ENCODE measurements at regions of chr16 and their contacts with region 1.

Region 1: GRCh38 chr16:3059000-3059722 is 6.3 kb upstream of the IL32 start:
- DNase-seq: peak; percentile 64 to 96
- H3K4me3 ChIP-seq: peak overlapping the region; percentile 39 to 86 (median 67)
- H3K27ac ChIP-seq: no peak overlapping the region
- H3K4me1 ChIP-seq: peaks cover 5 to 19% (median 6%) of the 10 kb centered on the region in 4 experiments; a peak in 6 of 7 replicates
- H3K27me3 ChIP-seq: no peaks in the 10 kb centered on the region; a peak in 1 of 7 replicates
- CTCF ChIP-seq: peak; percentile 79 to 99 (median 88)
- EP300 ChIP-seq: 0 out of 3 replicates have a peak, but pooled peaks of 1 of the 2 experiments have one; percentile 53
- POLR2A ChIP-seq: peak in 1 of 2 experiments; percentile 39; a peak in 1 of 3 replicates
- RAD21 ChIP-seq: peak; percentile 81 to 95

Region 2: DNA sequence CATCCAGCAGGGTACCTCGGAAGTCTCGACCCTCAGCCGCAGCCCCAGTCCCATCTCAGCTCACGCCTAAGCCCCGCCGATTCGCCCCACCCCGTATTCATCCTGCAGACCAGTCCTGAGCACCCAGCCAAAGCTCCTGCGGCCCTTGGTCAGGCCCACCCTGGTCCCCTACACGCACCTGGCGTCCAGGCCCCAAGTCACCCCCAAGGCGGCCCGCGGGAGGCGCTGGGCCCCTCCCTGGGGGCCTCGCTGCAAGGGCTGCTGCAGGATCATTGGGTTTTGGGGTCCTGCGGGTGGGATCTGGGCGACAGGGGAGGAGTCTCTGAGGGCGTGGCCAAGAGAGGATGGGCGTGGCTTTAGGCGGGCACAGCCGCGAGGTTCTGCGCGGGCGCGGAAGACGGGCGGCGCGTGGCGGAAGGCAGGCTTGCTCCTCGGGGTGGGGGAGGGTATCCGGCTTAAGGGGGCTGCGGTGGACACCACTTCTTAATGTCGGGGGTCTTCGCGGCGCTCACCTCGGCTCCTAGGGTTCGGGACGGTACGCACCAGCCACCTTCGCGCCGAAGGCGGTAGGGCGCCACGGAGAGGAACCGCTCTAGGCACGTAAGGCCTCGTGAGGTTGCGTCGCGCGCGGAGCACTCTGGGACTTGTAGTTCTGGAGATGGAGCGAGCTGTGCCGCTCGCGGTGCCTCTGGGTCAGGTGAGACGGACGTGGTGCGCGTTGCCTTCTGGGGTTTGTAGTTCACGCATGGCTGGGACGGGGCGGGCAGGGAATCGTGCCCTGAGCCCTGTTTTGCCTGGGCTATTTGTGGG is 35.3 kb before region 1 on chr16 and contains the starts of genes HCFC1R1 and THOC6:
- CTCF ChIA-PET with region 1: interaction called, 7 read pairs
- POLR2A ChIA-PET with region 1: interaction called, 43 read pairs
- DNase-seq: peak; percentile 97 to 98
- H3K4me3 ChIP-seq: peak within 1 kb of the TSS; percentile 39 to 97 (median 94)
- H3K27ac ChIP-seq: peak within 1 kb of the TSS; percentile 94
- H3K4me1 ChIP-seq: peaks cover 0 to 23% (median 20%) of the 10 kb centered on the region in 4 experiments; a peak in 6 of 7 replicates
- H3K27me3 ChIP-seq: no peaks in the 10 kb centered on the region
- CTCF ChIP-seq: no peak
- EP300 ChIP-seq: no peak
- POLR2A ChIP-seq: peak; percentile 86 to 89
- RAD21 ChIP-seq: peak in 1 of 2 experiments; percentile 2; a peak in 2 of 4 replicates
- total RNA-seq, gene HCFC1R1: 66.2 and 72.7 TPM in 2 replicates
- total RNA-seq, gene THOC6: 78.5 and 82.9 TPM in 2 replicates

Region 3: GRCh38 chr16:3038256-3038655 is 20.9 kb before region 1 on chr16:
- CTCF ChIA-PET with region 1: interaction called, 88 read pairs
- POLR2A ChIA-PET with region 1: interaction called, 6 read pairs
- DNase-seq: peak in 1 of 2 experiments; percentile 63
- H3K4me3 ChIP-seq: no peak overlapping the region; a peak in 1 of 8 replicates
- H3K27ac ChIP-seq: no peak overlapping the region; the same call in 1 of the 2 replicates
- H3K4me1 ChIP-seq: peaks cover 3 to 19% (median 12%) of the 10 kb centered on the region in 4 experiments
- H3K27me3 ChIP-seq: peaks cover 0 to 11% (median 3%) of the 10 kb centered on the region in 4 experiments; a peak in 1 of 7 replicates
- CTCF ChIP-seq: no peak
- EP300 ChIP-seq: no peak
- POLR2A ChIP-seq: no peak
- RAD21 ChIP-seq: no peak

Region 4: GRCh38 chr16:3074860-3075522 is 15.8 kb after region 1 on chr16:
- CTCF ChIA-PET with region 1: interaction called, 22 read pairs
- POLR2A ChIA-PET with region 1: interaction called, 15 read pairs
- DNase-seq: no peak
- H3K4me3 ChIP-seq: no peak overlapping the region
- H3K27ac ChIP-seq: no peak overlapping the region
- H3K4me1 ChIP-seq: peaks cover 0 to 2% (median 0%) of the 10 kb centered on the region in 4 experiments; a peak in 2 of 7 replicates
- H3K27me3 ChIP-seq: no peaks in the 10 kb centered on the region; a peak in 1 of 7 replicates
- CTCF ChIP-seq: no peak
- EP300 ChIP-seq: no peak
- POLR2A ChIP-seq: no peak
- RAD21 ChIP-seq: no peak

Region 5: DNA sequence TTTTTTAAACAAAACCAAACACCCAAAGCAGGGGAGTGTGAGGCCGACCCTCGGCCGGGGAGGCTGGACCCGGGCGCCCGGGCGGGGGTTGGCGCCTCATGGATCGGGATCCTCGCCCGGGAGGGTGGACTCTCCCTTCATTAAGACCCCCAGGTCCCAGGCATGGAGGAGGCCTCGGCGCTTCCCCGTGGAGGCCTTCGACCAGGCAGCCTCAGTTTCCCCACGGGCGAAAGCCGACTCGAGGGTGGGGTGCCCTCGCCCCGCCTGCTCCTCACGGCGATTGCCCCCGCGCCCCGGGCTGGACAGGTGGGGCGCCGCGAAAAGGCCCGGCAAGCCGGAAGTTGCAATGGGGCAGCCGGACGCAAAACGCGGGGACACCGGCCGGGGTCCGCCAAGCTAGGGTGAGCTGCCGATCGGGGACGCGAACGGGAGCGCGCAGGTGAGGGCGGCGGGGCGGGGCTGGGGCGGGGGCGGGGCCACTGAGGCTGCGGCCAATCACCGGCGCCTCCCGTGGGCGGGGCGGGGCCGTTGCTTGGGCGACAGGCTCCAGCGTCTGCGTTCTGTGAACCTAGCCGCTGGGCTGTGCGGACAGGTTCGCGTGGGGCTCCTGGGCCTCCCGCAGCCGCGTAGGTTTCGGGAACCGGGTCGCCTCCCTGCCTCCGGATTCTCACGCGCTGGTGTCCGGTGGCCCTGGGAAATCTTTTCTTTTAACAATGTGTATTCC is 47.2 kb after region 1 on chr16:
- CTCF ChIA-PET with region 1: interaction called, 35 read pairs
- POLR2A ChIA-PET with region 1: interaction called, 140 read pairs
- DNase-seq: peak in 1 of 2 experiments; percentile 97
- H3K4me3 ChIP-seq: peak overlapping the region; percentile 41 to 79 (median 64)
- H3K27ac ChIP-seq: peak overlapping the region; percentile 85
- H3K4me1 ChIP-seq: peaks cover 2 to 5% (median 4%) of the 10 kb centered on the region in 4 experiments; a peak in 5 of 7 replicates
- H3K27me3 ChIP-seq: no peaks in the 10 kb centered on the region
- CTCF ChIP-seq: no peak
- EP300 ChIP-seq: no peak
- POLR2A ChIP-seq: no peak; a peak in 1 of 3 replicates
- RAD21 ChIP-seq: no peak

Region 6: DNA sequence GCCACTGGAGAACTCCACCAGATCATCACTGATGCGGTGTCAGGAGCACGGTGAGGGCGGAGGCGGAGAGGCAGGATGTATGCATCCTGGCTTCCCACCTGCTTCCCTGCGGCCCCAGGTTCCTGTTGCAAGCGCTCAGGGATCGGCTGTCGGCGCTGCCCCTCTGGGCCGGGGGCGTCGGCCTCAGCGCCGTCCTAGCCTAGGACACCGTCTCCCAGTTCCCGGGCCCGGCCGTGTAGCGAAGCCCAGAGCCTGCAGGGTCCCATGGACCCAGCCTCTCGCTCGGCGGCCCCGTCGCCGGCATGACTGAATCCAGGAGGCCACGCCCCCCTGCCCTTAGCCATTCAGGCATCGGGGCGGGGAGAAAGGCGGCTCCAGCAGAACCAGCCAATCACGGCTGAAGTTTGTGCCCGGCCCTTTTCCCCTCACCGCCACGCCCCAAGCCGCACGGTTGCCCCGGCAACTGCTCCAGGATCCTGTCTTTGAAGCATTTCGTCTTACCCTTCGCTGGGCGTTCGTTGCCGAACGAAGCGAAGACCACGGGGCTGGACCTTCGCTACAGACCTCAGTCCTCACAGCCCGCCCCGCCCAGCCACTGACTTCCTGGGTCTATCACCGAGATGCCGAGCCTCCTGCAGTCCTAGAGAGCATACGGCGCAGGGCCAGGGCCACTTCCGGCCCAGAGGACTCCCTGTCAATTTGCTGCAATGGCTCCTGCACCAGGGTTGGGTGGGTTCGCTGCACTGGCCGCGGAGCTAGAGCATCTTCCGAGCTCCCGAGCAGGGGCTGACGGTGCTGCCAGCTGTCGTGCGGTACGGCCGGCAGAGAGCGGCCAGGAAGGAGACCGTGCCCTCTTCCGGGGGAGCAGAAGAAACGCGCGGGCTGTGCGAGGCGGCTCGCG is 65.1 kb after region 1 on chr16:
- CTCF ChIA-PET with region 1: interaction called, 76 read pairs
- POLR2A ChIA-PET with region 1: interaction called, 9 read pairs
- DNase-seq: peak; percentile 87 to 98
- H3K4me3 ChIP-seq: peak overlapping the region; percentile 43 to 76 (median 67)
- H3K27ac ChIP-seq: no peak overlapping the region
- H3K4me1 ChIP-seq: peaks cover 0 to 11% (median 4%) of the 10 kb centered on the region in 4 experiments; a peak in 5 of 7 replicates
- H3K27me3 ChIP-seq: no peaks in the 10 kb centered on the region
- CTCF ChIP-seq: peak; percentile 10 to 16 (median 11); a peak in 3 of 4 replicates
- EP300 ChIP-seq: no peak
- POLR2A ChIP-seq: peak in 1 of 2 experiments; percentile 71; a peak in 1 of 3 replicates
- RAD21 ChIP-seq: peak in 1 of 2 experiments; percentile 21; a peak in 1 of 4 replicates

Measured in H1 (cell line).